Calu3 (cell line): ENCODE measurements at regions of chr2 and their contacts with region 1.

Region 1: DNA sequence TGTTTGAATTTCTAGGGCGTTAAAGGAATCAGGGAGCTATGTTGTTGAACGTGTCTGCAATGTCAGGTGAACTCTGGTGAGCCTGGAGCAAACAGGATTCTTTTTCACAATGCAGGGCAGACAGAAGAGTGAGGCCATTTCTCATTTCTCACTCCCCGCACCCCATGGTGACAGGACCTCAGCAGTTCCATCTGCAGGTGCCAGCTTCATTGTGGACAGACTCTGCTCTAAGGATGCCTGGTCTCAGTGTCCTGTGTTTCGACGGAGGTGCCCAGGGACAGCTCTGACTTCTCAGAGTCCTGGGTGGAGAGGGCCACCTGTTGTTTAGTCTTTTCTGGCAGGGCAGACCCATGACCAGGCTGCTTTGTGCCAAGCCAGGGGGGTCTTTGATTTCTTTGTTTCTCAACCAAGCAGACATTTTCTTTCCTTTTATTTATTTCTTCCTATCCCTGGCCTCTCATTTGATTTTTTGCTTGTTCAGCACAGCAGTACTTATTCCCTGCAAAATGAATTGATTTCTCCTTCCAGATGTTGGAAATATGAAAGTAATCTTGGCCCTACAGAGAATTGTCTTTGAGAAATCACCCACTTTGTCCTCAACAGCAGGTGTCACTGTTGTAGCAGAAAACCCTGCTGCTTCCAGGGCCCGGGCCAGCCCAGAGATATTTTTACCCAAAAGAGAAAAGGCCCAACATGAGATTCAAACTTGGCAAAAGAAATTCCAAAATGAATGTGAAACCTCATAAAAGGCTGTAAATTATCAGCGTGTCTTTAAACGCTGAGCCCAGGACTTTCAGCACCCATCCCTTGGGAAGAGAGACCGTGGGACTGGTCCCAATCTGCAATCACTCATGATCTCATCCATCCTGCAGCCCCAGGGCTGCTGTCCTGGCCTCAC is 201.6 kb downstream of the RNF144A start:
- DNase-seq: peak; percentile 36
- H3K4me3 Mint-ChIP-seq: no peak overlapping the region
- H3K27ac Mint-ChIP-seq: no peak overlapping the region
- H3K4me1 Mint-ChIP-seq: no peaks in the 10 kb centered on the region
- H3K27me3 Mint-ChIP-seq: peaks cover 22% of the 10 kb centered on the region
- CTCF ChIP-seq: peak; percentile 35

Region 2: DNA sequence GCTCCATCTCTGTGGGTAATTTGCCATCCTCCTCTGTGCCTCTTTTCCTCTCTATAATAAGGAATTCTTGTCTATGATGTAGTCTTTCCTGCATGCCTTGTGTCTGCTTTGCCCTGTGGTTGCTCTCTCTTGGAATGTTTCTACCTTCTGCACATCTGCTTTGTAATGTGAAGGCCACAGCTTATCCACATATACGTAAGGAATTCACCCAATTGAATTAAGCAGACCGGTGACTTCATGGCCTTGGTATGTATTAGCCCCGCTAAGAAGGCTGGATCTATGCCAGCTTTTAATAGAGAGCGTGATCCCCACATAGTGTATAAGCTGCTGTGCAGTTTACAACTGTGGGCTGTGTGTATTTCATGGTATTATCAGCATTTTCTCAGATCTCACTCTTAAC is 73.1 kb after region 1 on chr2:
- CTCF ChIA-PET with region 1: no interaction called
- intact Hi-C with region 1: loop called (anchors 5 kb)
- DNase-seq: peak; percentile 49
- H3K4me3 Mint-ChIP-seq: no peak overlapping the region
- H3K27ac Mint-ChIP-seq: no peak overlapping the region
- H3K4me1 Mint-ChIP-seq: peaks cover 12% of the 10 kb centered on the region
- H3K27me3 Mint-ChIP-seq: peaks cover 5% of the 10 kb centered on the region
- CTCF ChIP-seq: no peak

Region 3: DNA sequence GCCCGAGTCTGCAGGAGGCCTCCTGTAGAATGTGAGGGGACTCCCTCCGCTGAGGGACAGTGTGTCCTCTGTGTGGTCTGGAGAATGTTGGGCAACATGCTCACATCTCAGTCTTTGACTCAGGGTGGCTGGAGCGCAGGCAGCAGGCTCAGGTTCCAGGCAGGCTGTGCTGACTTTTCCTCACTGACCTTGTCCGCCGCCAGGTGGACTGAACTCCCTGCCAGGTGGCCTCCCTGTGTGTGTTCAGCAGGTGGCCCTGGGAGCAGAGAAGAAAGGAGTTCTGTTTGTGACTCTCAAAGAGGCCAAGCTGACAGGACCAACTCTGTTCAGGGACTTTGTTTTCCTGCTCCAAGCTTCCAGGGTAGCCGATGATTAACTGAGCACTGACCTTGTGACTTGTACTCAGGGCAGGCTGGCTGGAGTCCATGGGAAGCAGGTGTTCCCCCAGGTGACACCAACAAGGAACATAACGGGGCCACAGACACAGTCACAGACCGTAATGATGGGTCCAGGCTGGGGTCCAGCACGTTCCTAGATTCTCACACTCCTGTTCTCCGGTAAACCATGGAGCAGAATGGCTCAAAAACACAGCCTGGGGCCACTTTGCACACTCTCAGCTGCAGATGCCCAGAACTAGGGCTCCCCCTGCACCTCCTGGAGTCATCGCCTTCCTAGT is 238.2 kb after region 1 on chr2:
- CTCF ChIA-PET with region 1: no interaction called
- intact Hi-C with region 1: loop called (anchors 10 kb)
- DNase-seq: peak; percentile 78
- H3K4me3 Mint-ChIP-seq: no peak overlapping the region
- H3K27ac Mint-ChIP-seq: no peak overlapping the region
- H3K4me1 Mint-ChIP-seq: no peaks in the 10 kb centered on the region
- H3K27me3 Mint-ChIP-seq: no peaks in the 10 kb centered on the region
- CTCF ChIP-seq: no peak

Region 4: DNA sequence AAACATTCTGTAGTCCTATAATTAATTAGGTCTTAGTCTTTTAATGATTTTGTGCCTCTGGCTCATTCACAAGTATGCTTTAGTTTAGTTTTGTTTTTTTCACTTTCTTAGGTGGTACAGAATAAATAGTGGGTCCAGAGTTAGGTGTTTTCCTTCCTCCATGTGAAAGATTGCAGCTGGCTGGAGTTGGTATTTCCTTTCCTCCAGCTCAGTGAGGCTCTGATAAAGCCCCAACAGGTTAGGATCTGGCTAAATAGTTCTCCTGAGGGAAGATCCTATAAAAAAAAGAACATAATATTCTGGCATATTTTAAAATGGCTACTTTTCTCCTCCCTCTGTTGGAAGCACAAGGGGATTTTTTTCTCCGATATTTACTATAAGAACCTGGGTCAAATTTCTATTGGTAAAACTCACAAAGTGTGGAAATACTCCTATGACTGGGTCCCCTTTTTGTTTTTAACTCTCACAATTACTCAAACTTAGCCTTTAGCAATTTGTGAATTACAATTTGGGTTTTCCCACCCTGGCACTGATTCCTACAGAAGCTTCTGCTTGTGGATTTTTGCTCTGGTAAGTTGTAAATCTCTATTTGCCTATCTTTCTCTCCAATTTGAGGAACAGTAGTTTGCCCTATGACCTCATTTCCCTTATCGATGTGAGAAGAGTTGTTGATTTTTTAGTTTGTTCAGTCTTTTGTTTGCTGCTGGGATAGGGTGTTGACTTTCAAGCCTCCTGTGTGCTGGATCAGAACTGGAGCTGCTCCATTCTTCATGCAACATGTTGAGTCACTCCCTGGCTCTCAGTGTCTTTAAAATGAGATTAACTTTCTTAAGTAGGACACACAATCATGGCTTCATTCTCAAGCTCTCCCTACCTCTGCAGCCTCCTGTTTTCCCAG is 299.2 kb after region 1 on chr2:
- CTCF ChIA-PET with region 1: no interaction called
- intact Hi-C with region 1: loop called (anchors 10 kb)
- DNase-seq: no peak
- H3K4me3 Mint-ChIP-seq: no peak overlapping the region
- H3K27ac Mint-ChIP-seq: no peak overlapping the region
- H3K4me1 Mint-ChIP-seq: no peaks in the 10 kb centered on the region
- H3K27me3 Mint-ChIP-seq: no peaks in the 10 kb centered on the region
- CTCF ChIP-seq: no peak

Region 5: GRCh38 chr2:8761529-8762164 is 1642.8 kb after region 1 on chr2:
- CTCF ChIA-PET with region 1: no interaction called
- intact Hi-C with region 1: loop called (anchors 10 kb)
- DNase-seq: peak; percentile 2
- H3K4me3 Mint-ChIP-seq: no peak overlapping the region
- H3K27ac Mint-ChIP-seq: no peak overlapping the region
- H3K4me1 Mint-ChIP-seq: no peaks in the 10 kb centered on the region
- H3K27me3 Mint-ChIP-seq: no peaks in the 10 kb centered on the region
- CTCF ChIP-seq: no peak